ENCODE measurements at regions of chr1 and their contacts with region 1.

Region 1: DNA sequence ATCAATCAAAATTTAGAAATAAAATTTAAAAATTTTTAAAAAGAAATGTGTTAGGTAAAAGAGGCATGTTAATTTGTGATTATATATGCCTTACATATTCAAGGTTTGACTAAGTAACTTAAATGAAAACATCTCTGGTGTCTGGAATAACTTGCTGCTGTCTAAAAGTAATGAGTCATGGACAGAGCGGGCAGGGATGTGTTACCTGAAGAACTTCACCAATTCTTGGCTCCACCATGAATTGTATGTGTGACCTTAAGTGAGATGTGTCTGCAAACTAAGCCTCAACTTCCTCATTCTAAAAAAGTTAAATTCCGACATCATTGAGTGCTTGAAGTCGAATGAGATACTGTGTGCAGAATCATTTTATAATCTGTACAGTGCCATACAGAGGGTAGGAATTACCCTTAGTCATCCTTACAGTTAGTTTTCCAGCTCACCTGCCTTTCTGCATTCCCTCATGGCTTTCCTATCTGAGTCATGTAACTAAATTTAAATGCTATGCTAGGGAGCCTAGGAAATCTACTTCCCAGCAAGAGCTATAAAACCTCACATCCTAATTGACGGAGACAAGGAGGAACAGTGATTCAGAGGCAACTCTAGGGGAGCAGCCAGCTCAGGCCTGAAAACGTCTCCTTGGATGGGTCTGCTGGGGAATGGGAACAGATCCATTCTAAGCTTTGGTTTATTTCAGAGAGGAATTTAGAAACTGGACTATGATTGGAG is 100.7 kb upstream of the TSPAN2 start:
- DNase-seq: no peak

Region 2: DNA sequence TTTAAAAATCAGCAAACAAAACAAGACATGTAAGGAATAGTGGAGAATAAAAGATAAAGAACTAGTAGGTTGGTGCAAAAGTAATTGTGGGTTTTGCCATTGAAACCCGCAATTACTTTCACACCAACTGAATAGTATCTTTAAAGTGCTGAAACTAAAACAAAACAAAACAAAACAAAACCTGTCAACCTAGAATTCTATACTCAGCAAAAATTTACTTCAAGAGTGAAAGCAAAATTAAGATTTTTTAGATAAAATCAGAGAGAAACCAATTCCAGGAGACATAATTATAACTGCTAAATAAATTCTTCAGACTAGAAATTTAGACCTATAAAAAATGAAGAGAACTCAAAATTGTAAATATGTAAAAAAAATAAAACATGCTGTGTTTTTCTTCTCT is 13.3 kb after region 1 on chr1:
- intact Hi-C with region 1: loop called in 1 of 2 experiments (anchors 2 kb)
- DNase-seq: no peak

Region 3: GRCh38 chr1:115337633-115338456 is 147.9 kb after region 1 on chr1 and contains the start of gene NGF:
- intact Hi-C with region 1: loop called in 1 of 2 experiments (anchors 10 kb)
- DNase-seq: peak; percentile 90
- total RNA-seq, gene NGF: 5.1 to 6.7 TPM

Region 4: DNA sequence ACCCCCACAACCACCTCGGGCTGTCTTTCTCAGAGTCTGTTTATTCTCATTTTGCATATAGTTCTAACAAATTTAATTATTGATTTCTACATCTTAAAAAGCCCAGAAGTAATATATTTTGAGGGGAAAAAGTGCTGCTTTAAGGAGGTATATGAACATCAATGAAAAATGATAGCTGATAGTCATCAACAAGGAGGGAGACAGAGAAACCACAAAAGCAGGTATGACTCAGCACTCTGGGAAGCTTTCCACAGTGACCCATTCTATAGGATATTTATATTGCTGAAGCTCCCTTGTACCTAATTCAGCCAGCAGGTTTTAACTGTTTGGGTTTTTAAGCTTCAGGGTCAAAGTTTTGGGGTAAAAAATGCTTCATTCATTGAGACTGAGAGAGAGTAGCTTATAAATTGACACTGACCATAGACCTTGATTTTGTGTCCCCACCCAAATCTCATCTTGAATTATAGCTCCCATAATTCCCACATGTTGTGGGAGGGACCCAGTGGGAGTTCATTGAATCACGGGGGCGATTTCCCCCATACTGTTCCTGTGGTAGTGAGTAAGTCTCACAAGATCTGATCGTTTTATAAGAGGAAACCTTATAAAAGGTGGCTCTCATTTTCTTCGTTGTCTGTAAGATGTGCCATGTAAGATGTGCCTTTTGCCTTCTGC is 479.2 kb after region 1 on chr1:
- intact Hi-C with region 1: loop called in 1 of 2 experiments (anchors 5 kb)
- DNase-seq: no peak

Measured in posterior vena cava (tissue), 2 donors.